GM12878 (cell line): ENCODE measurements at regions of chr19 and their contacts with region 1.

Region 1: DNA sequence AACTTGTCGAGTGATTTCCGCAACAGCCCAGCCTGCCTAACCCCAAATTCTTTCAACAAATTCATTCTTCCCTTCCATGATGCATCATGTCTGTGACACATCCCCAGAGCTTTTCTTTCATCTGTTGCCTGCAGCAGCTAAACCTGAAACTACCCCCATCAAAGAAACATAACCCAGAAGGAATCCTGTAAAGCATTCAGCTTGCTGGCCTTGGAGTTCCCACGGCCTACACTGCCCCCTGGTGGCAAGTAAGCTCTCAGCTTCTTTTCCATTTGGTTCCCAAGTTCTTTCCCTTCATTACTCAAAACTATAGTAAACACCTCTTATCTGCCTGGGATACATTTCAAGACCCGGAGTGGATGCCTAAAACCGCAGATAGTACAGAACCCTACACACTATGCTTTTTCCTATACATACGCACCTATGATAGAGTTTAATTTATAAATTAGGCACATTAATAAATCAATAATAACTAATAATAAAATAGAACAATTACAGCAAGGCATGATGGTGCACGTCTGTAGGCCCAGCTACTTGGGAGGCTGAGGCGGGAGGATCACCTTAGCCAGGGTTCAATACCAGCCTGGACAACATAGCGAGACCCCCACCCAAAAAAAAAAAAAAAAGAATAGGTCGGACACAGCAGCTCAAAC is 7.4 kb downstream of the ETHE1 start:
- DNase-seq: peak; percentile 33
- ATAC-seq: peak; percentile 77
- H3K4me3 ChIP-seq: no peak overlapping the region
- H3K27ac ChIP-seq: no peak overlapping the region
- H3K4me1 ChIP-seq: peaks cover under 1% of the 10 kb centered on the region; the same call in 1 of the 2 replicates
- H3K27me3 ChIP-seq: no peaks in the 10 kb centered on the region
- CTCF ChIP-seq: peak; percentile 76 to 90 (median 88)
- EP300 ChIP-seq: no peak
- POLR2A ChIP-seq: no peak
- RAD21 ChIP-seq: peak; percentile 95

Region 2: DNA sequence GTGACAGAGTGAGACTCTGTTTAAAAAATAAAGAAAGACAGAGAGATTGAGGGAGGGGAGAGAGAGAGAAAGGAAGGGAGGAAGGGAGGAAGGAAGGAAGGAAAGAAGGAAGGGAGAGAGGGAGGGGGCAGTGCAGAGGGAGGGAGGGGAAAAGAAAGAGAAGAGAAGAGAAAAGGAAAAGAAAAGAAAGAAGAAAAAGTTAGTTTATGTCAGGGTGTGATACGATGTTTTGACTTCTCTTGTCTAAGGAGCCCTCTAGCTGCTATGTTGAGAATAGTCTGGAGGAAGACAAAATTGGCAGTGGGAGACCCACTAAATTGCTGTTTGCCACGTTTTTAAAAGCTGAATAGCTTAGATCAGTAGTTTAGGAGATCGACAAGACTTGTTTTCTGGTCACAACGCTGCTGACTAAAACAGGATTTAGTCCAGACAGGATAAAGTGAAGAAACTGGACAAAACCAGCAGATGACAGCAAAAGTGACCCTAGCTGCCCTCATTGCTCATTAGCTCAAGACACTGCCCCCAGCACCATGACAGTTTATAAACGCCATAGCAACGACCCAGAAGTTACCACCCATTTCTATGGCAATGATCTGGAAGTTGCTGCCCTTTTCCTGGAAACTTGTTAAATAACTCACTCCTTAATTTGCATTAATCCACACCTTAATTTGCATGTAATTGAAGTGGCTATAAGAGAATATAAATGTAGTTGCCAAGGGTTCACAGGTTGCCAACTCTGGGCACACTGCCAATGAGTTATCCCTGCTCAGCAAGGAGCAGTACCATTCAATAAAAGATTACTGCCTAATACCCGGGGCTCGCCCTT is 93.8 kb before region 1 on chr19:
- CTCF ChIA-PET with region 1: interaction called, 65 read pairs
- POLR2A ChIA-PET with region 1: no interaction called
- RAD21 ChIA-PET with region 1: no interaction called
- SMC1A ChIA-PET with region 1: interaction called, 3 read pairs
- in situ Hi-C with region 1: no loop called
- intact Hi-C with region 1: no loop called
- DNase-seq: no peak
- ATAC-seq: no peak
- H3K4me3 ChIP-seq: no peak overlapping the region
- H3K27ac ChIP-seq: no peak overlapping the region
- H3K4me1 ChIP-seq: no peaks in the 10 kb centered on the region
- H3K27me3 ChIP-seq: no peaks in the 10 kb centered on the region
- CTCF ChIP-seq: peak; percentile 33 to 43 (median 35); a peak in 4 of 6 replicates
- EP300 ChIP-seq: no peak
- POLR2A ChIP-seq: no peak
- RAD21 ChIP-seq: peak; percentile 46

Region 3: DNA sequence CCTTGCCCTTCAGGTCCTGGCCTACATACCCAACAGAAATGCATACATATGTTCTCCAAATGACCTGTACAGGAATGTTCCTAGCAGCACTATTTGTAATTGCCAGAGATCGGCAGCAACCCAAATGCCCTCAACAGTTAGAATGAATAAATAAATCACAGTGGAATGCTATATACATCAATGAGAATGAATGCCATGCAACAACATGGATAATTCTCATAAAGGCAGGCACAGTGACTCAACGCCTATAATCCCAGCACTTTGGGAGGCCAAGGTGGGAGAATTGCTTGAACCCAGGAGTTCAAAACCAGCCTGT is 86.2 kb before region 1 on chr19:
- CTCF ChIA-PET with region 1: interaction called, 65 read pairs
- POLR2A ChIA-PET with region 1: no interaction called
- RAD21 ChIA-PET with region 1: interaction called, 15 read pairs
- SMC1A ChIA-PET with region 1: interaction called, 20 read pairs
- in situ Hi-C with region 1: no loop called
- intact Hi-C with region 1: no loop called
- DNase-seq: no peak
- ATAC-seq: no peak
- H3K4me3 ChIP-seq: no peak overlapping the region
- H3K27ac ChIP-seq: no peak overlapping the region
- H3K4me1 ChIP-seq: no peaks in the 10 kb centered on the region
- H3K27me3 ChIP-seq: no peaks in the 10 kb centered on the region
- CTCF ChIP-seq: no peak
- EP300 ChIP-seq: no peak
- POLR2A ChIP-seq: no peak
- RAD21 ChIP-seq: no peak

Region 4: GRCh38 chr19:43438291-43439096 is 81.1 kb before region 1 on chr19:
- CTCF ChIA-PET with region 1: interaction called, 393 read pairs
- POLR2A ChIA-PET with region 1: no interaction called
- RAD21 ChIA-PET with region 1: interaction called, 186 read pairs
- SMC1A ChIA-PET with region 1: interaction called, 194 read pairs
- in situ Hi-C with region 1: no loop called
- intact Hi-C with region 1: no loop called
- DNase-seq: no peak
- ATAC-seq: no peak
- H3K4me3 ChIP-seq: no peak overlapping the region
- H3K27ac ChIP-seq: no peak overlapping the region
- H3K4me1 ChIP-seq: no peaks in the 10 kb centered on the region
- H3K27me3 ChIP-seq: peaks cover 0 to 1% of the 10 kb centered on the region in 2 experiments; a peak in 1 of 4 replicates
- CTCF ChIP-seq: no peak
- EP300 ChIP-seq: no peak
- POLR2A ChIP-seq: no peak
- RAD21 ChIP-seq: no peak

Region 5: GRCh38 chr19:43463381-43464136 is 56.0 kb before region 1 on chr19:
- CTCF ChIA-PET with region 1: interaction called, 11 read pairs
- POLR2A ChIA-PET with region 1: interaction called, 3 read pairs
- RAD21 ChIA-PET with region 1: interaction called, 7 read pairs
- SMC1A ChIA-PET with region 1: interaction called, 5 read pairs
- in situ Hi-C with region 1: no loop called
- intact Hi-C with region 1: no loop called
- DNase-seq: peak; percentile 73
- ATAC-seq: peak; percentile 97
- H3K4me3 ChIP-seq: peak overlapping the region; percentile 77
- H3K27ac ChIP-seq: no peak overlapping the region
- H3K4me1 ChIP-seq: peaks cover 8% of the 10 kb centered on the region; the same call in 1 of the 2 replicates
- H3K27me3 ChIP-seq: no peaks in the 10 kb centered on the region
- CTCF ChIP-seq: no peak
- EP300 ChIP-seq: no peak
- POLR2A ChIP-seq: no peak
- RAD21 ChIP-seq: no peak

Region 6: DNA sequence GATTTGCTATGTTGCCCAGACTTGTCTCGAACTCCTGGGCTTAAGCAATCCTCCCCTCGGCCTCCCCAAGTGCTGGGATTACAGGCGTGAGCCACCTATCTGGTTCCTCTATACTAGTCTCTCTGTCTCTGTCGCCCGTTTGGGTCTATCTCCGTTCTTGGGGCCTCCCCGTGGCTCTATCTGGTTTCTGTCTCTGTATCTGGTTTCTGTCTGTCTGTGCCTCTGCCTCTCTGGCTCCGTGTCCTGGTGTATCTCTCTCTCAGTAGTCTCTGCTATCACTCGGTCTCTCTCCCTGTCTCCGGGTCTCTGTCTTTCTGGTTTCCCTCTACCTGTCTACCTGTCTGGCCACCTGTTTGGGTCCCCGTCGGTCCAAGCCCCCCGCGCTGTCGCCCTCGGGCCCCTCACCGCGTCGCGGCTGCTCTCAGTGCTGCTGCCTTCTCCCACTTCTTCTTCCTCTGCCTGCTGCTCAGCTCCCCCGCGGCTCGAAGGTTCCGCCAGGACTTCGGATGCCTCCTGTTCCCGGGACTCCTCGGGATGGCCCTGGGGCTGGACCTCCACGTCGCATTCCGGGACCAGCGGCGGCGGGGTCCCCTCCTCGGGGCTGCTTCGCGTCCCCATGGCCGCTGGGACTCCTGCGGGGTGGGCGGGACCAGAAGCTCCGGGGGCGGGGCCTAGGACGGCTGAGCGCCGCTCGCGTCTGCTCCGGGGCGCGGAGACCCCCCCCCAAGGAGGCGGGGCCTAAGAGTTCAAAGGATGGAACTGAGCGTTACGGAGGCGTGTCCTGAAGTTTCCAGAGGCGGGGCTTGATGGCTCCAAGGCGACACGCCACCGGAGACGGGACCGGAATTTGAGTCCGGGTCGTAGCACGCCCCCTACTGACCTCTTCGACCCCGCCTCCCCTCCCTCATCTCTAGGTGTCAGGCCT is 15.8 kb before region 1 on chr19:
- CTCF ChIA-PET with region 1: interaction called, 42 read pairs
- POLR2A ChIA-PET with region 1: interaction called, 6 read pairs
- RAD21 ChIA-PET with region 1: interaction called, 15 read pairs
- SMC1A ChIA-PET with region 1: interaction called, 11 read pairs
- in situ Hi-C with region 1: no loop called
- intact Hi-C with region 1: no loop called
- DNase-seq: peak; percentile 78
- ATAC-seq: peak; percentile 96
- H3K4me3 ChIP-seq: peak overlapping the region; percentile 67
- H3K27ac ChIP-seq: peak overlapping the region; percentile 73
- H3K4me1 ChIP-seq: peaks cover 4% of the 10 kb centered on the region
- H3K27me3 ChIP-seq: no peaks in the 10 kb centered on the region
- CTCF ChIP-seq: peak in 2 of 3 experiments; percentile 30 to 46; a peak in 4 of 6 replicates
- EP300 ChIP-seq: no peak
- POLR2A ChIP-seq: peak; percentile 75
- RAD21 ChIP-seq: no peak

Region 7: DNA sequence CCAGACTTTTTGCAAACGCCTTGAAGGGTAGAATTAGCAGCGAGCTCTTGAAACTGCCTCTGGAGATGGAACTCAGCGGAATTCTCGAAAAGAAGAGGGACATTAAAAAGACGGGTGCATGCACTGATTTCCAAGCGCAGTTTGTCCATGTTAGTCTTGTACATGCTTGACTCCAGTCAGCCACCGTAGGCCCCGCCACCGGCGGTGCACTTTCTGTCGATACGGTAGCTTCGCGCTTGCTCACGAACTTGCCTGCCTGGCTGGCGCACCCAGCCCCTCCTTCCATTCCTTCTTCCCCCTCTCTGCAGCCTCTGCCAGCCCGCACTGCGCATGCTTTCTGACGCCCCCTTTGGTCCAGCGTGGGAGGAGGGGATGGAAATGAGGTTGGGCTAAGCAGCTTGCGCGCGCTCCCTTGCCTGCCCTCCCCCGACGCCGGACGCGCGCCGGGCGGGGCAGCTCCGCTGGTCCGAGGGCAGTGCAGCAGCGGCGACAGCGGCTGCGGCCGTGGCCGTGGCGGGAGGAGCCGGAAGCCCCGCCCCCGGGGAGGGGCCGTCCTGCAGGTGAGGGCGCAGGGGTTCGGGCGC is 13.5 kb after region 1 on chr19 and contains the start of gene ZNF575:
- CTCF ChIA-PET with region 1: interaction called, 26 read pairs
- POLR2A ChIA-PET with region 1: interaction called, 11 read pairs
- RAD21 ChIA-PET with region 1: interaction called, 5 read pairs
- SMC1A ChIA-PET with region 1: interaction called, 5 read pairs
- in situ Hi-C with region 1: no loop called
- intact Hi-C with region 1: no loop called
- DNase-seq: peak; percentile 91
- ATAC-seq: peak; percentile 88
- H3K4me3 ChIP-seq: peak within 1 kb of the TSS; percentile 74
- H3K27ac ChIP-seq: peak within 1 kb of the TSS; percentile 37
- H3K4me1 ChIP-seq: peaks cover 8% of the 10 kb centered on the region; the same call in 1 of the 2 replicates
- H3K27me3 ChIP-seq: no peaks in the 10 kb centered on the region
- CTCF ChIP-seq: no peak
- EP300 ChIP-seq: no peak
- POLR2A ChIP-seq: peak; percentile 68
- RAD21 ChIP-seq: no peak
- polyA plus RNA-seq, gene ZNF575: 0.23 to 0.35 TPM

Region 8: GRCh38 chr19:43545276-43545675 is 25.7 kb after region 1 on chr19:
- CTCF ChIA-PET with region 1: no interaction called
- POLR2A ChIA-PET with region 1: no interaction called
- RAD21 ChIA-PET with region 1: no interaction called
- SMC1A ChIA-PET with region 1: no interaction called
- in situ Hi-C with region 1: no loop called
- intact Hi-C with region 1: no loop called
- DNase-seq: no peak
- ATAC-seq: no peak
- H3K4me3 ChIP-seq: no peak overlapping the region
- H3K27ac ChIP-seq: no peak overlapping the region
- H3K4me1 ChIP-seq: no peaks in the 10 kb centered on the region
- H3K27me3 ChIP-seq: no peaks in the 10 kb centered on the region
- CTCF ChIP-seq: no peak
- EP300 ChIP-seq: no peak
- POLR2A ChIP-seq: no peak
- RAD21 ChIP-seq: no peak

Region 9: GRCh38 chr19:44212250-44212865 is 692.8 kb after region 1 on chr19 and contains the start of gene ZNF227:
- CTCF ChIA-PET with region 1: no interaction called
- POLR2A ChIA-PET with region 1: no interaction called
- RAD21 ChIA-PET with region 1: no interaction called
- SMC1A ChIA-PET with region 1: no interaction called
- in situ Hi-C with region 1: no loop called
- intact Hi-C with region 1: no loop called
- DNase-seq: peak; percentile 48
- ATAC-seq: peak; percentile 98
- H3K4me3 ChIP-seq: peak within 1 kb of the TSS; percentile 82
- H3K27ac ChIP-seq: peak within 1 kb of the TSS; percentile 82
- H3K4me1 ChIP-seq: no peaks in the 10 kb centered on the region
- H3K27me3 ChIP-seq: no peaks in the 10 kb centered on the region
- CTCF ChIP-seq: no peak
- EP300 ChIP-seq: no peak
- POLR2A ChIP-seq: peak; percentile 89
- RAD21 ChIP-seq: no peak
- polyA plus RNA-seq, gene ZNF227: 4.3 to 5.1 TPM